Activated naive CD4-positive, alpha-beta T cell treated with anti-CD3 and anti-CD28 coated beads for 36 hours (primary cell): ENCODE measurements at regions of chr10 and their contacts with region 1.

Region 1: GRCh38 chr10:99906470-99906869 is 103.3 kb downstream of the DNMBP start:
- DNase-seq: no peak
- H3K4me3 Mint-ChIP-seq: no peak overlapping the region
- H3K27ac Mint-ChIP-seq: no peak overlapping the region
- H3K4me1 Mint-ChIP-seq: peaks cover 2% of the 10 kb centered on the region
- H3K27me3 Mint-ChIP-seq: no peaks in the 10 kb centered on the region

Region 2: DNA sequence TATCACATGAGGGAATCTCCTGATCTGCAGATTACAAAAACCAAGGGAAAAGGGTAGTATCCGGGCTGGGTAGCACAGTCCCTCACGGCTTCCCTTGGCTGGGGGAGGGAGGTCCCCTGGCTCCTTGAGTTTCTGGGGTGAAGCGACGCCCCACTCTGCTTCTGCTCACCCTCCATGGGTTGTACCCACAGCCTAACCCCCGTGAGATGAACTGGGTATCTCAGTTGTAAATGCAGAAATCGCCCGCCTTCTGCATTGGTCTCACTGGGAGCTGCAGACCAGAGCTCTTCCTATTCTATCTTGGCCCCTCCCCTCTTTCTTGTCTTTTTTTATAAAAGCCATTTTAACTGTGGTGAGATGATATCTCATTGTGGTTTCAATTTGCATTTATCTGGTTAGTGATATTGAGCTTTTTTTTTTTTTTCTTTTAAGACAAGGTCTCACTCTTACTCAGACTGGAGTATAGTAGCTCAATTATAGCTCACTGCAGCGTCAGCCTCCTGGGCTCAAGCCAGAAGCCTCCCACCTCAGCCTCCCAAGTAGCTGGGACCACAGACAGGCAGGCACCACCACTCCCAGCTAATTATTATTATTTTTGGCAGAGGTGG is 36.2 kb before region 1 on chr10:
- CTCF ChIA-PET with region 1: no interaction called
- intact Hi-C with region 1: loop called (anchors 1 kb)
- DNase-seq: peak; percentile 75
- H3K4me3 Mint-ChIP-seq: no peak overlapping the region
- H3K27ac Mint-ChIP-seq: peak overlapping the region; percentile 46
- H3K4me1 Mint-ChIP-seq: peaks cover 14% of the 10 kb centered on the region
- H3K27me3 Mint-ChIP-seq: peaks cover 80% of the 10 kb centered on the region

Region 3: GRCh38 chr10:99921948-99922347 is 15.5 kb after region 1 on chr10:
- CTCF ChIA-PET with region 1: no interaction called
- intact Hi-C with region 1: loop called (anchors 1 kb)
- DNase-seq: no peak
- H3K4me3 Mint-ChIP-seq: no peak overlapping the region
- H3K27ac Mint-ChIP-seq: no peak overlapping the region
- H3K4me1 Mint-ChIP-seq: peaks cover 2% of the 10 kb centered on the region
- H3K27me3 Mint-ChIP-seq: no peaks in the 10 kb centered on the region